Calu3 (cell line): ENCODE measurements at regions of chr15 and their contacts with region 1.

Region 1: GRCh38 chr15:48112242-48112641 is 8.5 kb upstream of the SLC24A5 start:
- DNase-seq: peak; percentile 9
- H3K4me3 Mint-ChIP-seq: no peak overlapping the region
- H3K27ac Mint-ChIP-seq: no peak overlapping the region
- H3K4me1 Mint-ChIP-seq: no peaks in the 10 kb centered on the region
- H3K27me3 Mint-ChIP-seq: peaks cover 33% of the 10 kb centered on the region
- CTCF ChIP-seq: no peak

Region 2: DNA sequence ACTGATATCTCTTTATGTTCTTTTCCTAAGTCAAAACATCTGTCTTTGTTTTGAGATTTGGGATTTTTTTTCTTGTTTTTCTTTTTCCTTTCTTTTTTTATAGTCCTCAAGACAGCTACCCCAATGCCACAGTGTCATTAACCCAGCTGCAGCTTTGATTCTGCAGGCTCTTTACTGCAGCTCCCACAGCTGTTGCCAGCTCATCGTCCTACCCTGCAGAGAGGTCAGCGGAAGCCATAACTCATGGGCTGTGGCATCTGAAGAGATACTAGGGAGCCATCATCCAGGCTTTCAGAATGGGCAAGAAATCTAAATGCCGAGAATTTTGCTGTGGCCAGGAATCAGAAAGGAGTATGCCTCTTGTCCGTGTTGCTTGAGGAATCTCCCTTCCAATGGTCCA is 35.8 kb before region 1 on chr15:
- CTCF ChIA-PET with region 1: no interaction called
- intact Hi-C with region 1: no loop called
- DNase-seq: no peak
- H3K4me3 Mint-ChIP-seq: no peak overlapping the region
- H3K27ac Mint-ChIP-seq: no peak overlapping the region
- H3K4me1 Mint-ChIP-seq: no peaks in the 10 kb centered on the region
- H3K27me3 Mint-ChIP-seq: peaks cover 45% of the 10 kb centered on the region
- CTCF ChIP-seq: no peak

Region 3: GRCh38 chr15:48096813-48097212 is 15.4 kb before region 1 on chr15:
- CTCF ChIA-PET with region 1: no interaction called
- intact Hi-C with region 1: no loop called
- DNase-seq: no peak
- H3K4me3 Mint-ChIP-seq: no peak overlapping the region
- H3K27ac Mint-ChIP-seq: no peak overlapping the region
- H3K4me1 Mint-ChIP-seq: no peaks in the 10 kb centered on the region
- H3K27me3 Mint-ChIP-seq: peaks cover 46% of the 10 kb centered on the region
- CTCF ChIP-seq: no peak

Region 4: DNA sequence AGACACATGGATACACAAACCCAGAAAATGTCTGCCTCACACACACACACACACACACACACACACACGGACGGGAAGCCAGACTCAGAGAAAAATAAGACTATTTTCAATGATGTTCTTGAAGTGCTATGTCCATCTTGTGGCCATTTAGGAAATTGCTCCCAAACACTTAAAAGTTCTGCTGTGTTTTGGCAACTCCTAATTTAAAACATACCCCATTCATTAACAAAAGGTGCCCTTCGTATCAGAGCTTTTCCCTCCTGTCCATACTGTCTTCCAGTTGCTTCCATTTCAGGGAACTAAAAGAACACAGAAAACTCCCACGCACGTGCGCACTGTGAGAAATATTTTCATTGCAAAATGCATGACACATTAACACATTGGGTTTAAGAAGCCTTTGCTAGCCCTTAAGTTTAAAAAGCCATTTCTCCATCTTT is 138.4 kb after region 1 on chr15:
- CTCF ChIA-PET with region 1: interaction called, 3 read pairs
- intact Hi-C with region 1: loop called (anchors 1 kb)
- DNase-seq: peak; percentile 50
- H3K4me3 Mint-ChIP-seq: no peak overlapping the region
- H3K27ac Mint-ChIP-seq: no peak overlapping the region
- H3K4me1 Mint-ChIP-seq: no peaks in the 10 kb centered on the region
- H3K27me3 Mint-ChIP-seq: peaks cover 41% of the 10 kb centered on the region
- CTCF ChIP-seq: no peak

Region 5: DNA sequence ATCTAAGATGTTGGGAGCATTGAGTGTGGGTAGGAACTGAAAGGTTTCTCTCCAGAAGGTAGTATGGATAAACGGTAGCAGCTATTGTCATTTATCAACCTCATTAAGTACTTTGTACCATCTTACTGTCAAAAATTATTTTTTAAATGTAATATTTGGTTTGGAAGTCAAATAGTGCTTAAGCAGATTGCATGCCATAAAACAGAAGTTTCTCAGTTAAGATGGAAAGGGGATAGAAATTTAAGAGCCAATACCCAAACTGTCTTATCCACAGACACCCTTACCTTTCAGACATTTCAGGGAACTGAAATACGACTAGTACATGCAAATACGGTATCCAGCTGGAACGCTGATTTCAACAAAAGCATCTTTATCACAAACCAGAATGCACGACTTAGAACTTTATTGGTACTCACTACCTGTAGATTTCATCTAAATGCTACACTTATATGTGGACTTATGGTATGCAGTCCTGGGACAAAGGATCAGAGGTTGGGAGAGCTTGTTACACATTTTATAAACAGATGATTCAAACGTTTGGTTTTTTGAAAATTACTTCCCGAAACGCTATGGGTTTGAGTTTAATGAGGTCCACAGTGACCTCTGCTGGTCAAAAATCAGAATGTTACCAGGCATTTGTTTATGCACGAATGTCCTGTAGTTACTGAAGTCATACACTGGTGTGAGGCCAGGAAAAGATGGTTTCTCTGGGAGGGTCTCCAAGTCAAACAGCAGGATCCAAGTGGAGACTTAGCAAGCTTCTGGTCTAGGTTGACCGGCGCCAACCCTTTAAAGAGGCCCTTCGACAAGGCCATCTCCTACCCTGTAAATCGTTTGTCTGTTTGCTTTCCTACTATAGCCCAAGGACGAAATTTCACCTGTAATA is 173.3 kb after region 1 on chr15:
- CTCF ChIA-PET with region 1: interaction called, 3 read pairs
- intact Hi-C with region 1: loop called (anchors 1 kb)
- DNase-seq: peak; percentile 57
- H3K4me3 Mint-ChIP-seq: no peak overlapping the region
- H3K27ac Mint-ChIP-seq: no peak overlapping the region
- H3K4me1 Mint-ChIP-seq: no peaks in the 10 kb centered on the region
- H3K27me3 Mint-ChIP-seq: peaks cover 34% of the 10 kb centered on the region
- CTCF ChIP-seq: peak; percentile 34

Region 6: DNA sequence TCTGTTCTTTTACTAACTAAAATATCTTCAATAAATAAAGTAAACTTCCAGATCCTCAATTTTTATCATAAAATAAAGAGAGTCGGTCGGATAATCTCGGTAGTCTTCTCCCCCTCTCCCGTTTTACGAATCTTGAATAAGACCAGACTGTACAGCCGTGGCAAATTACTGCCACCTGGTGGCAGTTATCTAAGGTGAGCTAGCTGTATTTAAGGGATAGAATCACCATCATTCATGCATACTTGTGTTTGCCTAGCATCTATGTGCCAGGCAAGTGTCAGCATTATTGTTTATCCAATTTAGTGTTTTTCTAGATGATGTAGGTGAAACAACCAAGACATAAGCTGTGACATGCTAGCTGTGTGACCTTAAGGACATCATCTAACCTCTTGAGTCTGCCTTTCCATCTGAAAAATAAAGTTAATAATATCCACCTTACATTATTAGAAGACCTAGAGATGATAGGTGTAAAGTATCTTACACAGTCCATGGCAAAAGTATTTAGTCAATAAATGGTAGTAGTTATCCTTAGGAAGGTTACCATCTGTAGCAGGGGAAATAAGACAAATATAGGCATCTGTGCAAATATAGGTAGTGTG is 240.3 kb after region 1 on chr15:
- CTCF ChIA-PET with region 1: no interaction called
- intact Hi-C with region 1: loop called (anchors 10 kb)
- DNase-seq: peak; percentile 67
- H3K4me3 Mint-ChIP-seq: no peak overlapping the region
- H3K27ac Mint-ChIP-seq: no peak overlapping the region
- H3K4me1 Mint-ChIP-seq: peaks cover 17% of the 10 kb centered on the region
- H3K27me3 Mint-ChIP-seq: no peaks in the 10 kb centered on the region
- CTCF ChIP-seq: peak; percentile 31